SK-N-SH (cell line): ENCODE measurements at regions of chr7 and their contacts with region 1.

Region 1: DNA sequence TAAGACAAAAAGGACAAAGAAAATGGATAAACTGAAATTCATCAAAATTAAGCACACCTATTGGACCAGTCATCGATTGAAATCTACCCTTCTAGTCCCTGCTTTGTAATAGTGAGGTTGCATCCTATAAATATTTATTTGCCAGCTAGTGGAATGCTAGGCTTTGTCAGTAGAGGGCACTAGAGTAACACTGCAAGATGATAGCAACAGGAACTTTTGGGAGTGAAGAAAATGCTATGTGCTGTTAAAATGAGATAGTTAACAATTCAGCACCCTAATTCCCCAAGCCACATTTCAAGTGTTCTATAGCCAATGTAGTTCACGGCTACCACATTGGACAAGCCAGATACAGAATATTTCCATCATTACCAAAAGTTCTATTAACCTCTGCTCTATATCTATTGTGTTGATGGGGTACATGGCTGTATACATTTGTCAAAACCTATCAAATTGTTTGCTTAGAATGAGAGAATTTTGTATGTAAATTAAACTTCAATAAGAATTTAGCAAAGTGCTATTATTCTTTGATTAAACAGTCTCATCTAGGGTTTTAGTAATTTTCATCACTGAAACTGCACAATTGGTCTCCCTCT is 69.8 kb downstream of the LSMEM1 start:
- DNase-seq: peak; percentile 74
- H3K4me3 ChIP-seq: no peak overlapping the region
- H3K27ac ChIP-seq: no peak overlapping the region
- H3K4me1 ChIP-seq: no peaks in the 10 kb centered on the region
- H3K27me3 ChIP-seq: no peaks in the 10 kb centered on the region
- CTCF ChIP-seq: peak; percentile 100
- EP300 ChIP-seq: no peak
- RAD21 ChIP-seq: peak; percentile 99

Region 2: GRCh38 chr7:112529506-112529905 is 21.1 kb before region 1 on chr7:
- CTCF ChIA-PET with region 1: interaction called, 14 read pairs
- POLR2A ChIA-PET with region 1: interaction called, 3 read pairs
- DNase-seq: no peak
- H3K4me3 ChIP-seq: no peak overlapping the region
- H3K27ac ChIP-seq: no peak overlapping the region
- H3K4me1 ChIP-seq: no peaks in the 10 kb centered on the region
- H3K27me3 ChIP-seq: no peaks in the 10 kb centered on the region
- CTCF ChIP-seq: no peak
- EP300 ChIP-seq: no peak
- RAD21 ChIP-seq: no peak

Region 3: GRCh38 chr7:112538726-112539255 is 11.8 kb before region 1 on chr7:
- CTCF ChIA-PET with region 1: interaction called, 14 read pairs
- POLR2A ChIA-PET with region 1: no interaction called
- DNase-seq: no peak
- H3K4me3 ChIP-seq: no peak overlapping the region
- H3K27ac ChIP-seq: no peak overlapping the region
- H3K4me1 ChIP-seq: no peaks in the 10 kb centered on the region
- H3K27me3 ChIP-seq: no peaks in the 10 kb centered on the region
- CTCF ChIP-seq: no peak
- EP300 ChIP-seq: no peak
- RAD21 ChIP-seq: no peak